ENCODE measurements at regions of chr7 and their contacts with region 1.

Region 1: DNA sequence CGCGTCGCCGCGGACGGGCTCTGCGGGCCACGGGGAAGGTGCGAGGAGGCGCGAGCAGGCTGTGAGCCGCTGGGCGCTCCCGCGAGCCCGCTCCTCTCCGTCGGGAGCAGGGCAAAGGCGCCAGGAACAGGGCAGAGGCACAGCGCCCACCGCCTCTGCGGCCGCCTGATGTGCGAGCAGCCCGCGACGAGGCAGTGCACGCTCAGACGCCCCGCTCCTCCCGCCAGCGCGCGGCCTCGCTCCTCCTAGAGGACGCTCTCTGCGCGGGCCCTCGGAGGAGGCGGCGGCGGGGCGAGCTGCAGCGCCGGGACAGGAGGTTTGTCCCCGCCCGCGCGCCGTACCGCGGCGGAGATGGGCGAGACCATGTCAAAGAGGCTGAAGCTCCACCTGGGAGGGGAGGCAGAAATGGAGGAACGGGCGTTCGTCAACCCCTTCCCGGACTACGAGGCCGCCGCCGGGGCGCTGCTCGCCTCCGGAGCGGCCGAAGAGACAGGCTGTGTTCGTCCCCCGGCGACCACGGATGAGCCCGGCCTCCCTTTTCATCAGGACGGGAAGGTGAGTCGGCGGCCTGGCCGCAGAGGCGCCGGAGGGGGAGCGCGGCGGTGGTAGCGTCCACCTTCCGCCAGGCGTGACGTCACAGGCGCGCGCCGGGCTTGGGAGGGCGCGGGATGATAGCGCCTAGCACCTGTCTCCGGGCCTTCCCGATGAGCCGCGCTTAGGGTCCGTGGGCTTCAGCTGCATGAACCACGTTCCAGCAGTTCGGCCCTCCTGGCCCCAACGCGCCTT is 731 bp downstream of the LANCL2 start:
- DNase-seq: peak; percentile 94
- H3K4me3 ChIP-seq: peak overlapping the region; percentile 68 to 83
- H3K27ac ChIP-seq: peak overlapping the region; percentile 95 to 98
- H3K4me1 ChIP-seq: no peaks in the 10 kb centered on the region
- H3K27me3 ChIP-seq: no peaks in the 10 kb centered on the region
- CTCF ChIP-seq: peak; percentile 22 to 51 (median 40)
- POLR2A ChIP-seq: peak; percentile 59

Region 2: DNA sequence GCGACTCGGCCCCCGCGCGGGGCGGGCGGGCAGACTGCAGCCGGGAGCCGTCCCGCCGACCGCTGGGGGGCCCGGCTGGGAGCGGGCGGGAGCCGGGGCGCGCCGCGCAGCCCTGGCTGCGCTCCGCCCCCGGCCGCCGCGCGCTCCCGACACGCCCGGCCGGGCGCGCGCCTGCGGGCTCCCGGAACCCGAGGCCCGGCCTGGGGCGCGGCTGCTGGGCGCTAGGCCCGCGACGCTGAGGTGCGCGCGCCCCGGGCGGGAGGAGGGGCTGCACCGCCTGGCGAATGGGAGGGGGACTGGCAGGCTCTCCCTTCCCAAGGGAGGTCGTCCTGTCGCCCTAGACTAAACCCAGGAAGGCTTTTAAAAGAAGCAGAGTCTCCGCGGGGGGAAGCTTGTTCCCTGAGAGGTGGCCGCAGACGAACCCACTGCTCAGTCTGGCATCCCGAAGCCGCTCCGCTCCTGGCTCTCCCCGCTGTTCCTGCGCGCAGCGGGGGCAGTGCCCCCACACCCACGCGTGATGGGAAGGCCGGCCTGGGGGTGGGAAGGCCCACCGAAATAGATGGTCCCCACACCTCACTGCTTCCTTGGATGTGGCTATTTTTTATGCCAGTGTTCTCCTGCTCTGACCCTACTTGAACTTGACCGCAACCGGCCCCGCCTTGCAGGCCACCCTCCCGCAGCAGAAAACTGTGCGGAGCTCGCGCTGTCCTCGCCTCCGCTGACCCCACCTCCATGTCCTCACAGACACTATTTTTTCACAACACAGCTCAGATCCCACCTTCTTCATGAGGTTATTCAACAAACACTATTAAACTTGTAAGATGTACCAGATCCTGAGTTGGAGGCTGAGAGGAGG is 206.7 kb after region 1 on chr7 and contains the start of gene VOPP1:
- intact Hi-C with region 1: loop called (anchors 10 kb)
- DNase-seq: peak; percentile 52
- H3K4me3 ChIP-seq: peak within 1 kb of the TSS; percentile 68 to 96
- H3K27ac ChIP-seq: peak within 1 kb of the TSS; percentile 77 to 85
- H3K4me1 ChIP-seq: peaks cover 15% of the 10 kb centered on the region
- H3K27me3 ChIP-seq: no peaks in the 10 kb centered on the region
- CTCF ChIP-seq: no peak
- POLR2A ChIP-seq: no peak
- total RNA-seq, gene VOPP1: 29.4 to 46.6 TPM

Measured in prostate gland (tissue), 2 donors.